HEK293T (cell line): ENCODE measurements at regions of chr1 and their contacts with region 1.

Region 1: GRCh38 chr1:151292207-151293030 is 10.3 kb downstream of the ZNF687 start:
- DNase-seq: no peak

Region 2: GRCh38 chr1:151399890-151400495 is 107.6 kb after region 1 on chr1:
- CTCF ChIA-PET with region 1: no interaction called
- POLR2A ChIA-PET with region 1: interaction called, 16 read pairs
- DNase-seq: peak; percentile 41